ENCODE measurements at regions of chr14 and their contacts with region 1.

Region 1: DNA sequence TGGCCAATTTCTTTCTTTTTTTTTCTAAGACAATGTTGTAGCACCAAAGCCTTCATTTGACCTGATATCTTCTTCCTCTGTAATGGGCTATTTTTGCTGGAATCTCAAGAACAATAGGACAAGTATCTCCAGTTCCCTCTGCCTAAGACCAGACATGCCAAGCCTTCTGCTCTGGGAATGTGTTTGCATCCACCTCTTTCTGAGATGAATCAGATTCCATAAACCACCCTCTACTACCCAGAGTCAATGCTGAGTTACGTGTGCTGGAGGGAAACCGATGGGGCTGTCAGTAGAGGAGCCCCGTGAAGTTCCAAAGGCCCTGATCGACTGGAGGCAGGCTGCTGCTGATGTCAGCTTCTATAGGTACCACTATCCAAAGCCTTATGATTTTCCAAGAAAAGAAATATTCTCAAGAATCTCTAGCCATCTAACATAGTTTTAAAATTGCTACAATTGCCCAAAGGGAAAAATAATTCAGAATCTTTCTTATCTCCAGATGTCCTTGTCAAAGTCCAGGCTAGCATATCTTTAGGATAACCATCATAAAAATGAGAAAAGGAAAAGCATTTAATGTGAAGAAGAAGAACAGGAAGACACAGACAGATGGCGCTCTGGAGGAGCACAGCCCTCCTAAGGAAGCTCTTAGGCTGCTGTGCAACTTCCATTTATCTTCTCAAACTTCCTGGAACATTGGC is 101.9 kb downstream of the SLC8A3 start:
- DNase-seq: peak; percentile 30
- ATAC-seq: peak; percentile 72
- H3K4me3 Mint-ChIP-seq: no peak overlapping the region
- H3K27ac Mint-ChIP-seq: no peak overlapping the region
- H3K4me1 Mint-ChIP-seq: no peaks in the 10 kb centered on the region
- H3K27me3 Mint-ChIP-seq: peaks cover 3% of the 10 kb centered on the region; the same call in 1 of the 2 replicates
- CTCF ChIP-seq: 0 out of 2 replicates have a peak, but pooled peaks have one; percentile 25

Region 2: DNA sequence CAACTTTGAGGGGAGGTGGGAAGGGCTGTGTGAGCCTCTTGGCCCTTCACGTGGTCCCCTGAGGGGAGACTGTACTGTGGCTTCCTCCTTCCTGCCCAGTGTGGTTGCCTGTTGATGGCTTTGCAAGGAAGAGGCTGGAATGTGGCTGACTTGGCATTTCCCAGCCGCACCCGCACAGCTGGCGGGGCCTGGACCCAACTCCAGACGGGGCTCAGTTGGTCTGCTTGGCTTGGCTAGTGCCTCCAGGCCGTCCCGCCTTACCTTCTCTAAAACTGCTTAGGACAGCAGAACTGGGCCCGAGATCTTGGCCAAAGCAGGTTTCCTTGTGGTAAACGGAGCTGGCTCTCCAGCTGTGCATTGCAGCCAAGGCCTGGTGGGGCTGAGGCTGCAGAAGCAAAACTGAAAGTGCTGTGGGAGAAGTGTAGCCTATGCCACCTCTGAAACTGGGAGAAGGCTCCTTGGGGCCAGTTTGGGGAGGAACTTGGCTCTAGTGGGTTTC is 68.1 kb before region 1 on chr14:
- CTCF ChIA-PET with region 1: no interaction called
- POLR2A ChIA-PET with region 1: no interaction called
- DNase-seq: no peak
- ATAC-seq: no peak
- H3K4me3 Mint-ChIP-seq: no peak overlapping the region
- H3K27ac Mint-ChIP-seq: no peak overlapping the region
- H3K4me1 Mint-ChIP-seq: peaks cover 9% of the 10 kb centered on the region
- H3K27me3 Mint-ChIP-seq: no peaks in the 10 kb centered on the region; the same call in 1 of the 2 replicates
- CTCF ChIP-seq: no peak

Region 3: DNA sequence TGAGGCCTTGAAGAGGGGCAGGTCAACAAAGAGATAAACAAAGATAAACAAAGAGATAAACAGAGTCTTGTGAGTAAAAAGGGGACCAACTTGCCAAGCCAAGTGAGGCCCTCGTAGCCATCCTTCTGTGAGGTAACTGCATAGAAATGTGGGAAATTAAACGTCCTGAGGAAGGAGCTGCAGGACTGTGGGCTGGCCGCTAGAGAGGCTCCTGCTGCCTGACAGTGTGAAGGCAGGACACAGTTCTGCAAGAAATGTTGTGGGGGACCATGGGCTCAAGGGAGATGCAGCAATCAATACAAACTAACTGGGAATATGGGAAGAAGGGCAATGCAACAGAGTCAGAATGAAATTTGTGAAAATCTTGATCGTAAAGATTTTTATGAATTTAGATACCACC is 10.0 kb after region 1 on chr14:
- CTCF ChIA-PET with region 1: interaction called, 29 read pairs
- POLR2A ChIA-PET with region 1: no interaction called
- DNase-seq: peak; percentile 56
- ATAC-seq: peak; percentile 95
- H3K4me3 Mint-ChIP-seq: no peak overlapping the region
- H3K27ac Mint-ChIP-seq: no peak overlapping the region
- H3K4me1 Mint-ChIP-seq: peaks cover 31% of the 10 kb centered on the region
- H3K27me3 Mint-ChIP-seq: no peaks in the 10 kb centered on the region
- CTCF ChIP-seq: no peak

Region 4: DNA sequence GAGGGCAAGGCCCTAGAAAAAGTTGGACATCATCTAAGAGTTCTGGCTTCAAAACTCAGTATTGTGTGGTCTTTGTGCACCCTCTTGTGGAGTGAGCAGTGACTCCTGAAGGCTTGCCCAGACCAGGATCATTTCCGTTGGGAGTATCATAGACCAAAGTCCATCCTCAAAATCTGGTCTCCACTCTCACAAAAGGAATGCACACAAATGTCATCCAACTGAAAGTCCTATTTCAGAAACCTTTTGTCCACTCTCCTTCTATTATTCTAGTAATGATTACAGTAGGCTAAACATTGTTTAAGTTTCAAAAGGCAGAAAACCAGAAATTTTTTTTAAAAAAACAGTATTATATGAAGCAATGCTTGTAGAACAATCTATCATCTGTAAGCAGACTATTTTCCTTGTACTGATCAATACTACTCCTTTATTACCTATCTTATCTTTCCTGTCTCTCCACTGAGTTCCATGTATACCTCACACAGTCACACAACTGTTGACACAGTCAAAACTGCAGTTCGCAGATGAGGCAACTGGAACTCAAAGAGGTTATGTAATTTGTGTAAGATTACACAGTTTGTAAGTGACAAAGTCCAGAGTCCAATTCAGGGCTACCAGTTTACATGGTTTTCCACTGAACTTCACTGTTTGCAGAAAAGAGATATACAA is 231.3 kb after region 1 on chr14:
- CTCF ChIA-PET with region 1: interaction called, 20 read pairs
- POLR2A ChIA-PET with region 1: interaction called, 3 read pairs
- DNase-seq: peak; percentile 49
- ATAC-seq: peak; percentile 91
- H3K4me3 Mint-ChIP-seq: no peak overlapping the region
- H3K27ac Mint-ChIP-seq: no peak overlapping the region
- H3K4me1 Mint-ChIP-seq: peaks cover 6% of the 10 kb centered on the region
- H3K27me3 Mint-ChIP-seq: no peaks in the 10 kb centered on the region
- CTCF ChIP-seq: peak; percentile 49; the same call in 1 of the 2 replicates

Region 5: DNA sequence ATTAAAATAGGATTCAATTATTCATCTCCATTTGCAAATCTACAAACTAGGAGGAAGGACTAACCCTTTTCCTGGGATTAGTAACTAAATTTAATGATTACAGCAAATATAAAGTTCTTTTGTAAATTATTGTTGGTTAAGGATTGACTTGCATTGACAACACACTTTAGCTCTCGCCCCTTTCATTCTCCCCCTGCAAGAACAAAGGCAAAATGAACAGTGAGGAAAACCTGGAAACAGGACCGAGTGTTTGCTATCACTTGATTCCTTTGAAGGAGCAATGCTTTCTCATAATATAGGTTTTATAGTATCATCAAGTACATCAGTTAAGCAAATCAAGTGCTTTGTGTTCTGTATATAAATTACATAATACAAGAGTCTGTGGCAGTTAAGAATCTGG is 280.1 kb after region 1 on chr14:
- CTCF ChIA-PET with region 1: no interaction called
- POLR2A ChIA-PET with region 1: no interaction called
- DNase-seq: no peak
- ATAC-seq: no peak
- H3K4me3 Mint-ChIP-seq: no peak overlapping the region
- H3K27ac Mint-ChIP-seq: no peak overlapping the region
- H3K4me1 Mint-ChIP-seq: no peaks in the 10 kb centered on the region
- H3K27me3 Mint-ChIP-seq: peaks cover 7% of the 10 kb centered on the region
- CTCF ChIP-seq: no peak

Measured in WTC11 (cell line).